Posterior vena cava (tissue), 2 donors: ENCODE measurements at regions of chr15 and their contacts with region 1.

Region 1: DNA sequence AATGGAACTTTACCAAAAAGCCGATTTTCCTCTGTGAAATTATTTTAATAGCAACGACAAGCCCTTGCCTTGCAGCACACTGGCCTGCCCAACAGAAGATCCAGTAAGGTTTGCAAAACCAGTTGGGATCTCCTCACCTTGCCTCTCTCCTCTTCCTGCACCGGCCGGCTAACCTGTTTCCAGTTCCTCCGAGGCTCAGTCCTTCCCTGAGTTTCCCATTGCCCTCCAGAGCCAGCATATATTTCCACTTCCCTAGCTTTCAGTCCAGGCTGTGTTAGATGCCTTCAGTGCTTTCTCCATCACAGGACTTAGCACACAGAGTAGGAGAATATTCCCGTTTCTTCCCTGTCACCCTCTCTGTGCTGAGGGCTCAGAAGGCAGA is 60.3 kb downstream of the NOX5 start:
- DNase-seq: no peak

Region 2: DNA sequence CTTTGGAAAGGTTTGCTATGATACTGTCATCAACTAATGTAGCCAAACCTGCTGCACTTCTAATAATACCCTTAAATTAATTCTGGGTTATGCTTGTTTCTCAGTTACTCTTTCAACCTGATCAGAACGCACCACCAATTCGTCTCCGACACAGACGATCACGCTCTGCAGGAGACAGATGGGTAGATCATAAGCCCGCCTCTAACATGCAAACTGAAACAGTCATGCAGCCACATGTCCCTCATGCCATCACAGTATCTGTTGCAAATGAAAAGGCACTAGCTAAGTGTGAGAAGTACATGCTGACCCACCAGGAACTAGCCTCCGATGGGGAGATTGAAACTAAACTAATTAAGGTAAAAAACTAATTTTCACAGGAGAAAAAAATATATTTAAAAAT is 369.9 kb after region 1 on chr15:
- intact Hi-C with region 1: loop called in 1 of 2 experiments (anchors 5 kb)
- DNase-seq: no peak